Heart left ventricle (tissue), 16 donors: ENCODE measurements at regions of chr14 and their contacts with region 1.

Region 1: DNA sequence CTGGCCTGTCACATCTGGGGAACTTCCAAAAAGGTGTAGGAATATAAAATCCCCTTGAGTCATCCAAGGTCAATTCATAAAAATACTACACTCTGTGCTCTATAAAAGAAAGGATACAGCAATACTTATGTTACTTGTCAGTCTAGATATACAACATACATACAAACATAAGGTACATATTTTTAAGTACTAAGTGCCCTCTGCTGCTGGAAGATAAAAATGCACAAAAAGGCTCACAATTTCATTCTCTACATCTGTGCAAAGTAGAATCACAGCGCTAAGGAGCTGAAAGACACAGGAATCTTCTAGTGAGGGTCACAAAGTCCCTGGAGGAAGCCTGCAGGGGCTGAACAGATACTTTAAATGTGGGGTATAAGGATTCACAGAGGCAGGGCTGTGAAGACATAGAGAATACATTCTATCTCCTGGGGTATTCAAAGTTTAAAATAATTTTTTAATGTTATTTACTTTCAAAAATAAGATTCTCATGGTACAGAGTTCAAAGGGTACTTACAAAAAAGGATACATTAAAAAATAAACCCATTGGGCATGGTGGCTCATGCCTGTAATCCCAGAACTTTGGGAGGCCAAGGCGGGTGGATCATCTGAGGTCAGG is 10.2 kb upstream of the GOLGA5 start:
- DNase-seq: peak in 1 of 5 donors; percentile 20
- ATAC-seq: peak in 3 of 4 donors; percentile 45 to 64 (median 58)
- H3K4me3 ChIP-seq: no peak overlapping the region
- H3K27ac ChIP-seq: no peak overlapping the region
- H3K4me1 ChIP-seq: peaks cover 0 to 32% (median 7%) of the 10 kb centered on the region in 12 donors
- H3K27me3 ChIP-seq: no peaks in the 10 kb centered on the region
- CTCF ChIP-seq: peak; percentile 25 to 77 (median 58)
- POLR2A ChIP-seq: no peak

Region 2: GRCh38 chr14:91510174-91511042 is 1273.5 kb before region 1 on chr14 and contains the start of gene PPP4R3A:
- intact Hi-C with region 1: loop called in 1 of 10 experiments (anchors 5 kb)
- DNase-seq: peak; percentile 96 to 97 (median 96)
- ATAC-seq: peak; percentile 93 to 97 (median 97)
- H3K4me3 ChIP-seq: peak within 1 kb of the TSS; percentile 73 to 100 (median 88)
- H3K27ac ChIP-seq: peak within 1 kb of the TSS; percentile 94 to 100 (median 99)
- H3K4me1 ChIP-seq: peaks cover 0 to 40% (median 22%) of the 10 kb centered on the region in 12 donors
- H3K27me3 ChIP-seq: no peaks in the 10 kb centered on the region
- CTCF ChIP-seq: no peak
- POLR2A ChIP-seq: peak; percentile 11 to 76
- total RNA-seq, gene PPP4R3A: 38.6 to 53.4 (median 42.3) TPM

Region 3: GRCh38 chr14:92712654-92713051 is 71.3 kb before region 1 on chr14:
- intact Hi-C with region 1: loop called (anchors 1 to 5 kb)
- DNase-seq: no peak
- ATAC-seq: peak in 1 of 4 donors; percentile 20
- H3K4me3 ChIP-seq: no peak overlapping the region
- H3K27ac ChIP-seq: no peak overlapping the region
- H3K4me1 ChIP-seq: peaks cover 0 to 6% (median 0%) of the 10 kb centered on the region in 12 donors
- H3K27me3 ChIP-seq: no peaks in the 10 kb centered on the region
- CTCF ChIP-seq: no peak
- POLR2A ChIP-seq: no peak

Region 4: GRCh38 chr14:92719890-92720323 is 64.0 kb before region 1 on chr14:
- intact Hi-C with region 1: loop called in 6 of 10 experiments (anchors 2 kb)
- DNase-seq: no peak
- ATAC-seq: peak in 2 of 4 donors; percentile 24 to 27
- H3K4me3 ChIP-seq: no peak overlapping the region
- H3K27ac ChIP-seq: peak overlapping the region in 10 of 12 donors; percentile 5 to 65 (median 60)
- H3K4me1 ChIP-seq: peaks cover 0 to 38% (median 10%) of the 10 kb centered on the region in 12 donors
- H3K27me3 ChIP-seq: no peaks in the 10 kb centered on the region
- CTCF ChIP-seq: no peak
- POLR2A ChIP-seq: no peak

Region 5: GRCh38 chr14:92733007-92733406 is 50.9 kb before region 1 on chr14:
- intact Hi-C with region 1: no loop called
- DNase-seq: no peak
- ATAC-seq: peak in 3 of 4 donors; percentile 59 to 71 (median 69)
- H3K4me3 ChIP-seq: no peak overlapping the region
- H3K27ac ChIP-seq: peak overlapping the region in 3 of 12 donors; percentile 6 to 34 (median 33)
- H3K4me1 ChIP-seq: peaks cover 0 to 45% (median 18%) of the 10 kb centered on the region in 12 donors
- H3K27me3 ChIP-seq: no peaks in the 10 kb centered on the region
- CTCF ChIP-seq: no peak
- POLR2A ChIP-seq: no peak

Region 6: DNA sequence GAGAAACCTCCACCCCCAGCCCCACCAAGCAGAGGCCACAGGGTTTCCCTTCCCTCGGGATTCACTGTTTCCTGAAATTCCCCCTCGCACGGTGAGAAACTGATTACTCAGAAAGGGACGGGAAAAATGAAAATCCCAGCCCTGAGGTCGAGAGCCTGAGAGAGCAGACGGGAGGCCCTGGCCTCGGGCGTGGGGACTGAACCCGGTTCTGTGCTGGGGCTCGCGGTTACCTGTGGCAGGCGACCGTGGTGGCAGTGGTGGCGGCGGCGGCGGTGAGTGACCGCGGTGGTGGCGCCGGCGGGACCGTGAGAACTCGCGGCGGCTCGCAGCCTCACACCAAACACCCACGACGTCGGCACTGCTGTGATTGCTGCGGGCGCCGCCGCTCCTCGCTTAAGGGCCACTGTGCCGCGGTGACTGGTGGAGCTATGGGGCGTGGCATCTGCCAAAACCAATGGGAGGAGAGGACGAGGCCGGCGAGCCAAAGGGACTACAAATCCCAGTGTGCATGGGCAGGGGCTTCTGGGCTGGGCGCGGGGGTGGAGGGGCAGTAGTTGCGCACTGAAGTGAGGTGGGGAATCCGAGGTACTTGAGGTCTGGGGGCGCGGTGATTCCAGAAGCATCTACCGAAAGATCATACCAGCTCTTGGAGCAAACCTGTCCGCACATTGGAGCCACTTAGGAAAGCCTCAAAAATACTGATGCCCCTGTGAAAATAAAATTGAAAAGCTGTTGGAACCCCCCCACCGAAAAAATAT is 35.5 kb before region 1 on chr14 and contains the start of gene LGMN:
- intact Hi-C with region 1: loop called in 4 of 10 experiments (anchors 5 kb)
- DNase-seq: peak; percentile 97 to 99 (median 98)
- ATAC-seq: peak; percentile 96 to 99 (median 98)
- H3K4me3 ChIP-seq: peak within 1 kb of the TSS; percentile 45 to 93 (median 81)
- H3K27ac ChIP-seq: peak within 1 kb of the TSS; percentile 58 to 94 (median 88)
- H3K4me1 ChIP-seq: peaks cover 0 to 62% (median 22%) of the 10 kb centered on the region in 12 donors
- H3K27me3 ChIP-seq: peaks cover 0 to 8% (median 0%) of the 10 kb centered on the region in 9 donors
- CTCF ChIP-seq: no peak
- POLR2A ChIP-seq: peak; percentile 89 to 100
- total RNA-seq, gene LGMN: 92.7 to 327 (median 114) TPM

Region 7: GRCh38 chr14:92973261-92973797 is 189.4 kb after region 1 on chr14:
- intact Hi-C with region 1: no loop called
- DNase-seq: peak; percentile 79 to 89 (median 84)
- ATAC-seq: peak; percentile 91 to 95 (median 92)
- H3K4me3 ChIP-seq: no peak overlapping the region
- H3K27ac ChIP-seq: peak overlapping the region; percentile 10 to 90 (median 80)
- H3K4me1 ChIP-seq: peaks cover 0 to 45% (median 19%) of the 10 kb centered on the region in 12 donors
- H3K27me3 ChIP-seq: no peaks in the 10 kb centered on the region
- CTCF ChIP-seq: peak; percentile 52 to 87 (median 72)
- POLR2A ChIP-seq: no peak